ENCODE measurements at regions of chr4 and their contacts with region 1.

Region 1: DNA sequence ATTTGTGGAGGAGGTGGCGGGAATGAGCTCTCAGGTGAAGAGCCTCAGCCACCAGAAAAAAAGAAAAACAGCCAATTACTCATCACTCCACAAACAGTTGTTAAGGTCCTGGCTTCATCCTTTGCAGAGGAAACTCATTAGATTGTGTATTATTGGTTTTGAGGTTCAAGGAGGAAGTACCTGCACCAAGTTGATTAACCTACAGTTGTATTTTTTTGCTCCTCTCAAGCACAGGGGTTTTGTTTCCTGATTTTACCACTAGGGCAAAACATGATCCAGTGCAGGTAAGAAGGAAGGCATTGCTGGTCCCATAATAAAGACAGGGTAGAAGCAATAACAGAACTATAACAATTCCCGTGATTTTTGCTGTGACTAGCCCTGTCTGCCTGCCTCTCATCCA is 84.0 kb upstream of the QRFPR start:
- DNase-seq: no peak
- H3K4me3 ChIP-seq: no peak overlapping the region
- H3K27ac ChIP-seq: no peak overlapping the region
- H3K4me1 ChIP-seq: no peaks in the 10 kb centered on the region
- H3K27me3 ChIP-seq: no peaks in the 10 kb centered on the region
- CTCF ChIP-seq: no peak
- POLR2A ChIP-seq: no peak

Region 2: GRCh38 chr4:121390335-121390734 is 74.5 kb before region 1 on chr4:
- intact Hi-C with region 1: no loop called
- DNase-seq: no peak
- H3K4me3 ChIP-seq: no peak overlapping the region
- H3K27ac ChIP-seq: no peak overlapping the region
- H3K4me1 ChIP-seq: no peaks in the 10 kb centered on the region
- H3K27me3 ChIP-seq: no peaks in the 10 kb centered on the region
- CTCF ChIP-seq: no peak
- POLR2A ChIP-seq: no peak

Region 3: DNA sequence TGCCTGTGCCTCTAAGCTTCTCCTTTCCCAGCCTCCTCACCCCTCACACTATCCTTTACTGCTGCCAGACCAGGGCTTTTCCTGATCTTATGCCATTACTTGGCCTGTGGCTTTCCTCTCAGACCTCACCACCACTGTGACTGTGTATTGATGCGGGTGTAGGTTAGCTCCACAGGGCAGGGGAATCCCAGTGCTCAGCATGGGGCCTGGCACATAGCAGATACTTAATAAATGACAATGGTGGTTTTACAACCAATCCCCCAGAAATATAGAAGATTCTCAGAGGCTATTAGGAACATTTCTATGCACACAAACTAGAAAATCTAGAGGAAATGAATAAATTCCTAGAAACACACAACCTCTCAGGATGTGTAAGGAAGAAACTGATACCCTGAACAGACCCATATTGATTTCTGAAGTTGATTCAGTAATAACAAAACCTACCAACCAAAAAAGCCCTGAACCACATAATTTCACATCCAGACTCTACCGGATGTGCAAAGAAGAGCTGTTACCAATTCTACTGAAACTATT is 45.6 kb after region 1 on chr4:
- intact Hi-C with region 1: no loop called
- DNase-seq: no peak
- H3K4me3 ChIP-seq: no peak overlapping the region
- H3K27ac ChIP-seq: no peak overlapping the region
- H3K4me1 ChIP-seq: no peaks in the 10 kb centered on the region
- H3K27me3 ChIP-seq: no peaks in the 10 kb centered on the region
- CTCF ChIP-seq: no peak
- POLR2A ChIP-seq: no peak

Region 4: GRCh38 chr4:121648516-121648915 is 183.7 kb after region 1 on chr4:
- intact Hi-C with region 1: loop called (anchors 5 kb)
- DNase-seq: no peak
- H3K4me3 ChIP-seq: no peak overlapping the region
- H3K27ac ChIP-seq: no peak overlapping the region
- H3K4me1 ChIP-seq: no peaks in the 10 kb centered on the region
- H3K27me3 ChIP-seq: no peaks in the 10 kb centered on the region
- CTCF ChIP-seq: no peak
- POLR2A ChIP-seq: no peak

Measured in thyroid gland (tissue), 4 donors.